Activated B cell treated with CpG ODN at 0.5 μM for 24 hours (primary cell): ENCODE measurements at regions of chr18 and their contacts with region 1.

Region 1: GRCh38 chr18:26121476-26121875 is 12.2 kb upstream of the PSMA8 start:
- DNase-seq: no peak
- ATAC-seq: no peak
- H3K4me3 Mint-ChIP-seq: no peak overlapping the region
- H3K27ac Mint-ChIP-seq: no peak overlapping the region
- H3K4me1 Mint-ChIP-seq: no peaks in the 10 kb centered on the region
- H3K27me3 Mint-ChIP-seq: peaks cover 9% of the 10 kb centered on the region
- CTCF ChIP-seq: no peak

Region 2: DNA sequence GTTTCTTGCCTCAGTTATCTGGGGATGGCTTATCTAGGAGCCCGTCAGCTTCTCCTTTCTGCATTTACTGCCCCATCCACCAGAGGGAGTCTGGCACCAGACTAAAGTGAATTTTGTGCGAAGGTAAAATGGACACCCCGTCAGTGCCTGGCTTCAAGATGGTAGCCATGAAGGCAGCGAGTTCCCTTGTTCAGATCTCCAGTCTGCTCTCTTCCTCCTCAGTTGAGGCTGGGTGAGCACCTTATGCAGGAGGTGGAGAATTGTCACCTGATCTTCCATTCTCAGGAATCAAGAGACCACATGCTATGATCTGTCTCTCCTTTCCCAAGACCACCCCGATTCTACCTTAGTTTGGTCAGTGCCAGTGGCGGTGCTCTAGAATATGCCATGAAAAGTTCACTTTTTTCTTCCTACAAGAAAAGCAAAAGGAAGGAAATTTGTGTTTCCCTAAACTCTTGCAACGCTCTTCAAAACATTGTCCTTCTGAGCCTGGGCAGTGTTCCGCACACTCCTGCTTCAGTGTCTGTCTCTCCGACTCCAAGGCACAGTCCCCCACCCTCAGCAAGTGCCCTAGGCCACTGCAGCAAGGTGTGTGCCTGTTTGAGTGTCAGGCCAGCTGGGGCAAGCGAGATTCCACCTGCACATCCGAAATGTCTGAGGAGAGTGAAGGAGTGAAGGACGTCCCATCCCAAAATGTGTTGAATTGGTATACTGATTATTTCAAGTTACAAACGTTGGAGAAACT is 199.6 kb before region 1 on chr18:
- CTCF ChIA-PET with region 1: interaction called, 3 read pairs
- POLR2A ChIA-PET with region 1: no interaction called
- intact Hi-C with region 1: loop called (anchors 10 kb)
- DNase-seq: peak; percentile 23
- ATAC-seq: peak; percentile 57
- H3K4me3 Mint-ChIP-seq: no peak overlapping the region
- H3K27ac Mint-ChIP-seq: no peak overlapping the region
- H3K4me1 Mint-ChIP-seq: peaks cover 2% of the 10 kb centered on the region
- H3K27me3 Mint-ChIP-seq: peaks cover 5% of the 10 kb centered on the region
- CTCF ChIP-seq: no peak

Region 3: DNA sequence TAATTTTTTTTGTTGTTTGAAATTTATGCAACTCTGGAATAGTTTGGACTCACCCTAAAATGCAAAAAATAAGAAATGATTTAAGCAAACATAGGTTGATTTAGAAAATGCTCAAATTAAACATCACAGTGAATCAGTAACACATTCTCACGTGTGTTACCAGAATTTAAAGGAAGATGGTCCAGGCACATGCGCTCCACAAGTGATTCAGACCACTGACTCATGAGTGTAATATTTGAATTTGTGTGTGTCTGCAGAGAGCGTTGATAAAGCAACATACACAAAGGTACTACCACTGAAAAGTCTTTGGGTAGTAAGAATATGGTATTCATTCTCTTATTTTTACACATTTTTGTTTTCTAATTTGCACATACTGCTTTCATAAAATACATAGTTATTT is 39.0 kb before region 1 on chr18:
- CTCF ChIA-PET with region 1: no interaction called
- POLR2A ChIA-PET with region 1: no interaction called
- intact Hi-C with region 1: no loop called
- DNase-seq: no peak
- ATAC-seq: no peak
- H3K4me3 Mint-ChIP-seq: no peak overlapping the region
- H3K27ac Mint-ChIP-seq: no peak overlapping the region
- H3K4me1 Mint-ChIP-seq: peaks cover 25% of the 10 kb centered on the region
- H3K27me3 Mint-ChIP-seq: no peaks in the 10 kb centered on the region
- CTCF ChIP-seq: no peak

Region 4: GRCh38 chr18:26133652-26134051 is 12.2 kb after region 1 on chr18 and contains the start of gene PSMA8:
- CTCF ChIA-PET with region 1: no interaction called
- POLR2A ChIA-PET with region 1: no interaction called
- intact Hi-C with region 1: loop called (anchors 2 kb)
- DNase-seq: peak; percentile 22
- ATAC-seq: peak; percentile 75
- H3K4me3 Mint-ChIP-seq: peak within 1 kb of the TSS; percentile 83
- H3K27ac Mint-ChIP-seq: peak within 1 kb of the TSS; percentile 81
- H3K4me1 Mint-ChIP-seq: peaks cover 4% of the 10 kb centered on the region
- H3K27me3 Mint-ChIP-seq: no peaks in the 10 kb centered on the region
- CTCF ChIP-seq: no peak
- total RNA-seq, gene PSMA8: 0.89 and 0.93 TPM in 2 replicates